MCF 10A (cell line): ENCODE measurements at regions of chr9 and their contacts with region 1.

Region 1: DNA sequence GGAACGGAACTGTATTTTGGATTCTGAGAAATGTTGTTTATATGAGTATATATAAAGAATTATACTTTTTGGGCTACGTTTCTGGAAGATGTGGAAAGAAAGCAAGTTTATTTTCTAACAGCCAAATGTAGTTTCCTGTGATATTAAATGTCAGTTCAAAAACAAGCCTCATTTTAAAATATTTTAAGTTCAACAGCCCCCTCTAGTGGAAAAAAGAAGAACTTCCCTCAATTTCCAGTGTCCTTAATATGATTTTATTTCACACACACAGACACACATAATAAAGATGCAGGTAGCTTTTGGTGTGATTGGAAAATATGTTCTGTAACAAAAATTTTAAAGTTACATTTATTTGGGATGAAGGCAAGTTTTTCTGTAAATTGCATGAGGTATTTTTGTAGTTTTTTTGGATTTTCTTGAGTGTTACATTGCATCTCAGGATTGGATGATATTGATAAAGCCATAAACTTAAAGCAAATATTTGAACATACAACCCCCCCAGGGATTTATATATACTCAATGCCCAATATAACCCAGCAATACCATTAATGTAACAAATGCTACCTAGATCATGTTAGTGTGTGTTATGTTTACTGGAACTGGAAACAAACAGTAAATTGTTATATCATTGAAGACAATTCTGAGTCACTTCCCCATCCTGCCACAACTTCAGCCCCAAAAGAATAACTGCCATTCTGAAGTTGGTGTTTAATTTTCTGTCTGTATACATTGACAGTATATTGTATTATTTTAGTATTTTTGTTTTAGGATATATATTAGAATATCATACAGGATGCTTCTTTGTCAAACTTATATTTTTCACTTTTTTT is 54.0 kb downstream of the CCDC171 start:
- DNase-seq: peak; percentile 51
- H3K4me3 Mint-ChIP-seq: no peak overlapping the region
- H3K27ac Mint-ChIP-seq: no peak overlapping the region
- H3K4me1 Mint-ChIP-seq: no peaks in the 10 kb centered on the region
- H3K27me3 Mint-ChIP-seq: no peaks in the 10 kb centered on the region
- CTCF ChIP-seq: peak; percentile 43

Region 2: GRCh38 chr9:15104826-15105420 is 501.9 kb before region 1 on chr9:
- CTCF ChIA-PET with region 1: no interaction called
- POLR2A ChIA-PET with region 1: no interaction called
- intact Hi-C with region 1: loop called (anchors 2 kb)
- DNase-seq: peak; percentile 57
- H3K4me3 Mint-ChIP-seq: no peak overlapping the region
- H3K27ac Mint-ChIP-seq: no peak overlapping the region
- H3K4me1 Mint-ChIP-seq: peaks cover 6% of the 10 kb centered on the region
- H3K27me3 Mint-ChIP-seq: peaks cover 43% of the 10 kb centered on the region
- CTCF ChIP-seq: peak; percentile 82

Region 3: DNA sequence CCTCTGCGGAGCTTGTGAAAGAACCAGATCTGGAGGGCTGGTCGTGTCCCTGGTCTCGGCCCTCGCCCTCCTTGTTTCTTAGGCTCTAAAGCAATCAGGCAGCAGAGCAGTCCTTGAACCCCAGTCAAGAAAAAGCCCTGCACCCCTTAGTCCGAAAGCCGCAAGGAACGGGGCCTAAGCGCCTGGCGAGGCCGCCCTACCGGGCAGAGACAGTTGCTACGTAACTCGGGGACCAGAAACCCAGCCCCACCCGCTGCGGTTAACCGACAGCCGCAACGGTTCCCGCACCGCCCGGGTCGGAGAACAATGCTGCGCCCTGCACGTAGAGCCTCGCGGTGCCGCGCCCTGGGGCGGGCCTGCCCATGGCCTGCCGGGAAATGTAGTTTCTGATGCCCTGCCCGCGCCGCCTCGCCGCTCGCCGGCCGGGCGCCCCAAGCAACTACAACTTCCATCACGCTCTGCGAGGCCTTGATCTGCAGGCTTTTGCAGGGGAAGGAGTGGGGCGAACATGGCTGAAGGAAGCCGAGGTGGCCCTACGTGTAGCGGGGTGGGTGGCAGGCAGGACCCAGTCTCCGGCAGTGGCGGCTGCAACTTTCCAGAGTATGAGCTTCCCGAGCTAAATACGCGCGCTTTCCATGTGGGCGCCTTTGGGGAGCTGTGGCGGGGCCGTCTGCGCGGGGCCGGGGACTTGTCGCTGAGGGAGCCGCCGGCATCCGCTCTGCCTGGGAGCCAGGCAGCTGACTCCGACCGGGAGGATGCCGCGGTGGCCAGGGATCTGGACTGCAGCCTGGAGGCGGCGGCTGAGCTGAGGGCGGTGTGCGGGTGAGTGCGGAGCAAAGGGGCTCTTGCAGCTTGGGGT is 184.3 kb before region 1 on chr9 and contains the start of gene SNAPC3:
- CTCF ChIA-PET with region 1: interaction called, 6 read pairs
- POLR2A ChIA-PET with region 1: no interaction called
- intact Hi-C with region 1: loop called (anchors 2 kb)
- DNase-seq: peak; percentile 94
- H3K4me3 Mint-ChIP-seq: peak within 1 kb of the TSS; percentile 79
- H3K27ac Mint-ChIP-seq: peak within 1 kb of the TSS; percentile 84
- H3K4me1 Mint-ChIP-seq: peaks cover 21% of the 10 kb centered on the region
- H3K27me3 Mint-ChIP-seq: no peaks in the 10 kb centered on the region
- CTCF ChIP-seq: no peak
- total RNA-seq, gene SNAPC3: 20.7 and 21.9 TPM in 2 replicates

Region 4: GRCh38 chr9:15510789-15511575 is 95.9 kb before region 1 on chr9 and contains the start of gene PSIP1:
- CTCF ChIA-PET with region 1: interaction called, 3 read pairs
- POLR2A ChIA-PET with region 1: interaction called, 5 read pairs
- intact Hi-C with region 1: loop called (anchors 5 kb)
- DNase-seq: peak; percentile 83
- H3K4me3 Mint-ChIP-seq: peak within 1 kb of the TSS; percentile 85
- H3K27ac Mint-ChIP-seq: peak within 1 kb of the TSS; percentile 100
- H3K4me1 Mint-ChIP-seq: peaks cover 34% of the 10 kb centered on the region
- H3K27me3 Mint-ChIP-seq: no peaks in the 10 kb centered on the region
- CTCF ChIP-seq: no peak
- total RNA-seq, gene PSIP1: 55.3 and 57.8 TPM in 2 replicates

Region 5: GRCh38 chr9:15618540-15619331 is 11.9 kb after region 1 on chr9:
- CTCF ChIA-PET with region 1: interaction called, 13 read pairs
- POLR2A ChIA-PET with region 1: no interaction called
- intact Hi-C with region 1: no loop called
- DNase-seq: no peak
- H3K4me3 Mint-ChIP-seq: no peak overlapping the region
- H3K27ac Mint-ChIP-seq: no peak overlapping the region
- H3K4me1 Mint-ChIP-seq: no peaks in the 10 kb centered on the region
- H3K27me3 Mint-ChIP-seq: no peaks in the 10 kb centered on the region
- CTCF ChIP-seq: no peak